CD8-positive, alpha-beta T cell (primary cell): ENCODE measurements at regions of chr19 and their contacts with region 1.

Region 1: DNA sequence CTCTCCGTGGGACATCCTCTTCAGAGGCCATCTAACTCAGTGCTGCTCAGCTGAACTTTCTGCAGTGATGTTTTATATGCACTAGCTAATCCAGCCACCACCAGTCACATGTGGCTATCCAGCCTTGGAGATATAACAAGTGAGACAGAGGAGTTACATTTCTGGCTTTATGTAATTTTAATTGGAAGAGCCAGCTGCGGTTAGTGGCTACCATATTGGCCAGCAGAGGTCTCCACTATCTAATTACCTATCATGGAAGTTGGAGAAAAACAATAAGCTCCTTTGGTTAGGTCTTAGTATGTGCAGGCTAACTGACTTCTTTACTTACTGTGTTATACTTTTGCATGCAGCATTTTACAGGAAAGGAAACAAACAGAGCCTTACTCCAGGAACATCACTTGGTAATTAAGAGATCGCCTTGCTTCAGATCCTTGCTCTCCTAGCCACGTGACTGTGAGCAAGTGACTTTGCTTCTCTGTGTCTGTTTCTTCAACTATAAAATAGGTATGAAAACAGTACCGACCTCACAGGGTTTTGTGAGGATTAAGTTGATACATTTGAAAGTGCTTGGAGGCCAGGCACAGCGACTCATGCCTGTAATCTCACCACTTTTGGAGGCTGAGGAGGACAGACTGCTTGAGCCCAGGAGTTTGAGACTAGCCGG is 1.6 kb upstream of the KLK10 start:
- DNase-seq: peak in 2 of 9 experiments; percentile 25 to 46
- ATAC-seq: no peak
- H3K4me3 ChIP-seq: no peak overlapping the region
- H3K4me3 Mint-ChIP-seq: no peak overlapping the region
- H3K27ac ChIP-seq: no peak overlapping the region
- H3K27ac Mint-ChIP-seq: no peak overlapping the region
- H3K4me1 ChIP-seq: peaks cover 17% of the 10 kb centered on the region
- H3K4me1 Mint-ChIP-seq: peaks cover 15% of the 10 kb centered on the region
- H3K27me3 ChIP-seq: peaks cover 8 to 37% of the 10 kb centered on the region in 2 experiments
- H3K27me3 Mint-ChIP-seq: peaks cover 67% of the 10 kb centered on the region
- CTCF ChIP-seq: peak; percentile 23

Region 2: GRCh38 chr19:51168564-51169282 is 147.6 kb after region 1 on chr19:
- CTCF ChIA-PET with region 1: interaction called, 19 read pairs
- POLR2A ChIA-PET with region 1: no interaction called
- intact Hi-C with region 1: loop called in 1 of 2 experiments (anchors 2 kb)
- DNase-seq: no peak
- ATAC-seq: no peak
- H3K4me3 ChIP-seq: no peak overlapping the region
- H3K4me3 Mint-ChIP-seq: no peak overlapping the region
- H3K27ac ChIP-seq: no peak overlapping the region
- H3K27ac Mint-ChIP-seq: no peak overlapping the region
- H3K4me1 ChIP-seq: peaks cover 27% of the 10 kb centered on the region
- H3K4me1 Mint-ChIP-seq: peaks cover 28% of the 10 kb centered on the region
- H3K27me3 ChIP-seq: no peaks in the 10 kb centered on the region
- H3K27me3 Mint-ChIP-seq: no peaks in the 10 kb centered on the region
- CTCF ChIP-seq: no peak